Esophagus muscularis mucosa (tissue), 4 donors: ENCODE measurements at regions of chr3 and their contacts with region 1.

Region 1: DNA sequence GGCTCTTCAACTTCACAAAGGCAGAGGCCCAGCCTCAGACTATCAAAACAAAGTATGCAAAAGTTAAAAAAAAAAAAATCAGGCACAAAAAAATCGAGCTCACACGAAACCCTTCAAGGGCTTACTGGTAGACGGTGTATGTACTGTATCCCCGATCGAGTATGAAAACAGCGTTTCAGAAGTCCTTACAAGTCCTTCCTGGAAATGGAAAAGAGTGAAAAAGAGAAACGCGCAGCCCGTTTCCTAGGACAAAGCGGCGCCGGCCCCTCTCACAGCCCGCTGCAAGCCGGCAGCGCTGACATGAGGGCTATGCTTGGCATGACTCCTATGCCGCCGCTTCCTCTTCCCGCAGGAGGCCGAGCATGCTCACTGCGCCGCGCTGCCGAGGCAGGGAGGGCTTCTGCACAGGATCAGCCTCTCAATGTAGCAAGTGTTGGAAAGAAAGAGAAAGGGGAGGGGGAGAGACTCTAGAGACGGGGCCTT is at the start of gene VGLL4:
- DNase-seq: peak; percentile 97
- H3K4me3 ChIP-seq: peak within 1 kb of the TSS; percentile 57 to 72 (median 69)
- H3K27ac ChIP-seq: peak within 1 kb of the TSS; percentile 89 to 93 (median 92)
- H3K4me1 ChIP-seq: peaks cover 27 to 42% (median 37%) of the 10 kb centered on the region in 4 donors
- H3K27me3 ChIP-seq: no peaks in the 10 kb centered on the region
- CTCF ChIP-seq: peak in 1 of 3 experiments; percentile 32
- EP300 ChIP-seq: peak; percentile 47
- POLR2A ChIP-seq: no peak
- total RNA-seq, gene VGLL4: 51.5 to 222 (median 80.7) TPM

Region 2: GRCh38 chr3:11477407-11477911 is 166.2 kb before region 1 on chr3:
- intact Hi-C with region 1: loop called (anchors 10 kb)
- DNase-seq: no peak
- H3K4me3 ChIP-seq: no peak overlapping the region
- H3K27ac ChIP-seq: peak overlapping the region; percentile 62 to 83 (median 72)
- H3K4me1 ChIP-seq: peaks cover 25 to 54% (median 54%) of the 10 kb centered on the region in 4 donors
- H3K27me3 ChIP-seq: no peaks in the 10 kb centered on the region
- CTCF ChIP-seq: no peak
- EP300 ChIP-seq: peak; percentile 81
- POLR2A ChIP-seq: no peak

Region 3: DNA sequence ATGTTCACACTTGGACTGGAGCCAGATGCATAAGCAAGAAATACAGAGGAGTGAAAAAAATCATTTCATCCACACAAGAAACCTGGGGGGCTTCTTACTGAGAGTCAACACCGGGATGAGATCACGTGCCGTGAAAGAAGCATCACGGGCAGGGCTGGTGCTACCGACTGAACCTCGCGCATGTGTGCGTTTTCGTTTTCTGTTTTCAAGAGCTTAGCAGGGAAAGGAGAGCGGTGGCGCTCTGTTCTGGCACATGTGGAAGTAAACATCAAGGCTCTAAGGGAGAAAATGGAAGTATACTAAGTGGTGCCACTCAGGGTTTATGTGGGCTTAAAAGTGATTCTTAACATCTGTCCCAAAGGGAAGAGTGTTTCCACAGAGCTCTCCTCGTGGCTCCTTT is 55.9 kb before region 1 on chr3:
- intact Hi-C with region 1: loop called (anchors 5 kb)
- DNase-seq: no peak
- H3K4me3 ChIP-seq: no peak overlapping the region
- H3K27ac ChIP-seq: peak overlapping the region in 2 of 4 donors; percentile 27 to 37
- H3K4me1 ChIP-seq: peaks cover 71 to 100% (median 98%) of the 10 kb centered on the region in 4 donors
- H3K27me3 ChIP-seq: no peaks in the 10 kb centered on the region
- CTCF ChIP-seq: no peak
- EP300 ChIP-seq: no peak
- POLR2A ChIP-seq: no peak

Region 4: GRCh38 chr3:11601446-11602238 is 42.0 kb before region 1 on chr3:
- intact Hi-C with region 1: loop called (anchors 2 kb)
- DNase-seq: no peak
- H3K4me3 ChIP-seq: peak overlapping the region in 1 of 4 donors; percentile 8
- H3K27ac ChIP-seq: peak overlapping the region; percentile 85 to 92 (median 86)
- H3K4me1 ChIP-seq: peaks cover 62 to 95% (median 84%) of the 10 kb centered on the region in 4 donors
- H3K27me3 ChIP-seq: no peaks in the 10 kb centered on the region
- CTCF ChIP-seq: no peak
- EP300 ChIP-seq: no peak
- POLR2A ChIP-seq: no peak